Dendritic cell treated with granulocyte-macrophage colony-stimulating factor and Interleukin-4, amounts not matched to agents 40 ng/mL and 50 ng/mL, for 4 days (primary cell): ENCODE measurements at regions of chr9 and their contacts with region 1.

Region 1: GRCh38 chr9:85559526-85559925 is 182.2 kb downstream of the AGTPBP1 start:
- H3K4me3 Mint-ChIP-seq: no peak overlapping the region
- H3K27ac Mint-ChIP-seq: no peak overlapping the region
- H3K4me1 Mint-ChIP-seq: no peaks in the 10 kb centered on the region
- H3K27me3 Mint-ChIP-seq: no peaks in the 10 kb centered on the region

Region 2: DNA sequence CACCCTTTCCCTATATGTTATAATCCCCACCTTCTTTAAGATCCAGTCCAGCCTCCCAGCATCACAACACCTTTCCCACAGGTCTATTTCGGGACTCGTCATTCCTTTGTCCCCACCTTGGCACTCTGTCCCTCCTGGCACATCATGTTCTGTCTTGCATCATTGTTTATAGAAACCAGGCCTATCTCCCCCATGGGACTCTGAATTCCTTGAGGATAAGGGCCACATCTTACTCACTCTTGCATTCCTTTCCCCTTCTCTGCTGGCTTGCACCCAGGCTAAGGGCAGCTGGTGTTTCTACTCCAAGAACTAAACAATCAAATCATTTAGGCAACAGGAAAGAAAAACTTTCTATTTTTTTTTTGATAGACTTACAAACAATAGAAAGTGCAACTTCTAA is 23.4 kb before region 1 on chr9:
- intact Hi-C with region 1: loop called (anchors 2 kb)
- H3K4me3 Mint-ChIP-seq: no peak overlapping the region
- H3K27ac Mint-ChIP-seq: no peak overlapping the region
- H3K4me1 Mint-ChIP-seq: peaks cover 16% of the 10 kb centered on the region
- H3K27me3 Mint-ChIP-seq: no peaks in the 10 kb centered on the region

Region 3: DNA sequence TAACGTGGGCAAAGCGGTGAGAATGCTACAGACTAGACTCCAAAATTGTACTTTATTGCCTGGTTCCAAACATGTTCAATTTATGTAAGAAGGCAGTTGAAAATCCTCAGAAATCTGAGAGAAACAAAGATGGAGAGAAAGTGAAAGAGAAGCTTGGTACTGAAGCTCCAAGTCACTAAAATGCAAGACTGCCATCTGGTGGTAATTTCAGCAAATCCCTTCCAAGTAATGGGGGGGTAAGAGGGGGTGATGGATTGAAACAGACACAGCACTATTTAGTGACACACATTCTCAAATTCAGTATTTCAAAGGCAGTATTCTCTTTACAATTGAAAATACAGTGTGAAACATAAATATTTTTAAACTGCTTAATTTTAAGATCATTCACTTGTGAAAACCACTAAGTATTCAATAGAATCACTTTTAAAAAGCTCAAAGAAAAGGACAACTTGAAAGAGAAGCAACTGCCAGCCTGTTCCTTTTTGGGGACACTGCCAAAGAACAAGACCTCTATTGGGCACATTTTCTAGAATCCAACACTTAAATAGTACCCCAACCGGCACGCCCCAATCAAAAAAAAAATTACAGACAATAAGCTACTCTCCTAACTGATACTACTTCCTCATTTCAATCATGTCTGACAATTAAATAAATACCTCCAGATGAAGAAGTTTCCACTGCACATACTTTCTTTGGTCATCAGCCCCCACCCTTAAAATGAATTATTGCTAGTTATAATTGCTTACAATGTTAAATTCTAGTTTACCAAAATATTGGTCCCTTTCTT is 50.7 kb after region 1 on chr9:
- intact Hi-C with region 1: no loop called
- H3K4me3 Mint-ChIP-seq: no peak overlapping the region
- H3K27ac Mint-ChIP-seq: no peak overlapping the region
- H3K4me1 Mint-ChIP-seq: peaks cover 13% of the 10 kb centered on the region
- H3K27me3 Mint-ChIP-seq: no peaks in the 10 kb centered on the region